ENCODE measurements at regions of chr1 and their contacts with region 1.

Region 1: GRCh38 chr1:109075531-109076490 is at the start of gene TAF13:
- DNase-seq: peak; percentile 94
- H3K4me3 Mint-ChIP-seq: peak within 1 kb of the TSS; percentile 99
- H3K27ac Mint-ChIP-seq: peak within 1 kb of the TSS; percentile 95
- H3K4me1 Mint-ChIP-seq: peaks cover 17% of the 10 kb centered on the region
- H3K27me3 Mint-ChIP-seq: no peaks in the 10 kb centered on the region
- total RNA-seq, gene TAF13: 28.4 to 29.0 TPM

Region 2: DNA sequence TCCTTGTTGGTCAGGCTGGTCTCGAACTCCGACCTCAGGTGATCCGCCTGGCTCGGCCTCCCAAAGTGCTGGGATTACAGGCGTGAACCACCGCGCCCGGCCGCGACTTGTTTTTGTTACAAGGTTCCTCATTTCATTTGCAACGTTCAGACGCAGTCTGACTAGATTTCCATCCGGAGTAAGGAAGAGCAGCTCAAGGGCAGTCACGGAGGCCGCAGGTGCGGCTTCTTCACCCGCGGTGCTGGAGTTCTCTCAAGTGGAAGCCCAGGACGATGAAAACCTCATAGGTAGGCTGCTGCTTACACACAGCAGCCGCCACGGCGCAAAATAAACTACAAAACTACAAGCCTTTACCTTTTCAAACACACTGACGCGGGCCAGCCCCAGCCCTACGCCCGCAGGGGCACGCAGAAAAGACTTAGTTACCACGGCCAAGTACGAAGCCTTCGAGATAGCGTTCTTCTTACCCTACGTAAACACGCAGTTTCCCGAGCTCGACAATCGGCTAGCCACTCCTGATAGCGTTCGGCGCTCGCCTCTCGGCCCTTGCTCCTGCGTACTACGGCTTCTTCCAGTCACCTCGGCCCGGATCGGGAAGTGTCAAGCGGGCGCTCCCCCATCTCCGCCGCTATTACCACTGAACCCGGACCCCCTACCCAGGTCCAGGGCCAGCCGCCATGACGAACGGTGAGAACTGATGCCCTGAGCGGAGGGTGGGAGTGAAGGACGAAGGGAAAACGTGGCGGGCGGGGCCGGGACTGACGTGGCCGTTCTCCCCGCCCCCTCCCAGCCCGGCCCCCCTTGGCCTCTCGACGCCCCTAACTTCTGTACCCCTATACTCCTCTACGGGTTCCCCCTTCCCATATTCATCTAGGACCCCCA is 14.6 kb after region 1 on chr1 and contains the start of gene TMEM167B:
- CTCF ChIA-PET with region 1: interaction called, 10 read pairs
- POLR2A ChIA-PET with region 1: interaction called, 7 read pairs
- intact Hi-C with region 1: loop called (anchors 1 kb)
- DNase-seq: peak; percentile 94
- H3K4me3 Mint-ChIP-seq: peak within 1 kb of the TSS; percentile 88
- H3K27ac Mint-ChIP-seq: peak within 1 kb of the TSS; percentile 92
- H3K4me1 Mint-ChIP-seq: peaks cover 28% of the 10 kb centered on the region
- H3K27me3 Mint-ChIP-seq: no peaks in the 10 kb centered on the region
- total RNA-seq, gene TMEM167B: 31.9 to 32.6 TPM

Region 3: GRCh38 chr1:109099938-109100773 is 24.3 kb after region 1 on chr1:
- CTCF ChIA-PET with region 1: interaction called, 13 read pairs
- POLR2A ChIA-PET with region 1: interaction called, 26 read pairs
- intact Hi-C with region 1: loop called (anchors 1 kb)
- DNase-seq: peak; percentile 98
- H3K4me3 Mint-ChIP-seq: peak overlapping the region; percentile 98
- H3K27ac Mint-ChIP-seq: peak overlapping the region; percentile 99
- H3K4me1 Mint-ChIP-seq: peaks cover 14% of the 10 kb centered on the region
- H3K27me3 Mint-ChIP-seq: peaks cover 3% of the 10 kb centered on the region

Region 4: DNA sequence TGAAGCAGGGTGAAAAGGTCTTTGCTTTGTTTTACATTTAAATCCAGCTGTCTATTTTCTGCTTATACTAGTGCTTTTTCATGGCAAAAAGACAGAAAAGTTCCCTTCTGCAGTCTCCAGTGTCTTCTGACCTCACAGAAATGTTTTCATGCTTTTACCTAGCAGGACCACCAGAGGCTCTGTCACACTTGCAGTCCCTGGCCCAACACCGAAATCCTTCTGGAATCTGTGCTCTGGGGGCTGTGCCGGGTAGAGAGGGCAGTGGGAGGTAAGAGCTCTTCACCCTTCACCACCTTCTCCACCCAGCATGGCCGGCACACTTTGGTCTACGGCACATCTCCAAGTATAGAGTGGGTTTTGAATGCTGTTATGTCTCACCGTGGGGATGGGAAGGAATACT is 522.8 kb after region 1 on chr1:
- CTCF ChIA-PET with region 1: no interaction called
- POLR2A ChIA-PET with region 1: no interaction called
- intact Hi-C with region 1: no loop called
- DNase-seq: no peak
- H3K4me3 Mint-ChIP-seq: no peak overlapping the region
- H3K27ac Mint-ChIP-seq: no peak overlapping the region
- H3K4me1 Mint-ChIP-seq: peaks cover 22% of the 10 kb centered on the region
- H3K27me3 Mint-ChIP-seq: no peaks in the 10 kb centered on the region